ENCODE measurements at regions of chr12 and their contacts with region 1.

Region 1: GRCh38 chr12:113980537-113981337 is 14.6 kb upstream of the RBM19 start:
- DNase-seq: peak; percentile 74
- ATAC-seq: peak; percentile 96
- H3K4me3 ChIP-seq: no peak overlapping the region
- H3K27ac ChIP-seq: no peak overlapping the region
- H3K4me1 ChIP-seq: no peaks in the 10 kb centered on the region
- H3K27me3 ChIP-seq: peaks cover 15% of the 10 kb centered on the region
- CTCF ChIP-seq: peak; percentile 99
- POLR2A ChIP-seq: peak; percentile 55; the same call in 1 of the 2 replicates
- RAD21 ChIP-seq: peak; percentile 99

Region 2: DNA sequence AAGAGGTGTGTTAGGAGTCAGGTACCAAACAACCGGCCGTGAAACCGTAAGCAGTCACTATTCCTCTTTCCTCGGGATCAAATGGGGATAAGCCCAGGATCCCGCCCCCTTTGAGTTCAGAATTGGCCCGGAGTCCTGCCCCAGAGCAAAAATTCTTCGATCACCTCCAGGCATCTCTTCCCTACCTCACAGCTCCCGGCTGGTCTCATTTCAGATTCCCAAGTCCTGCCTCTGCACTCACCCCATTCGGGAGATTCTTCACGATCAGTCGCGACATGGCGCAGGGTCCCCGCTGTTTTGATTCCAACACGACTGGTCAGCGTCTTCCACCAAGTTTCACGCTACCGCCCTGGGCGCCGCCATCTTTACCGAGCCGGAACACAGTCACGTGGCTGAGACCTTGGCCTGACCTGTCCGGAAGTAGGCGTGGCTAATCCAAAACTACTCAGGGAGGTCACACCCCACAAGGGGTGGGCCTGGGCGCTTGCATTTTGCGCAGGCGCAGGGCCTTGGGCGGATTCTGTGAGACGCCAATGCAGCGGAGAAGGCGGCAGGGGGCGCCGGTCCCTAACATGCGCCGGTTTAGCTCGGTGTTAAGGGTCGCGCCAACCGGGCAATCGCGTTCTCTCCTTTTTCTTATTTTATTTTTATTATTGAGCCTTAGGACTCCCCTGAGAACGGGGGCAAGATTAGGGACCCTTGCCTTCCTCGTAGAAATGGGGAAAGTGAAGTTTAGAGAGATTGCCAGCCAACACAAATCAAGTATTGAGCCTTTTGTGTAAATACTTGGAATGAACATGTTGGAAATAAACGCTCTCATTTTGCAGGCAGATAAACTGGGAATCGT is 14.6 kb before region 1 on chr12 and contains the start of gene RBM19:
- CTCF ChIA-PET with region 1: interaction called, 18 read pairs
- POLR2A ChIA-PET with region 1: no interaction called
- dilution Hi-C with region 1: no loop called
- in situ Hi-C with region 1: no loop called
- intact Hi-C with region 1: no loop called
- DNase-seq: peak; percentile 97
- ATAC-seq: peak; percentile 100
- H3K4me3 ChIP-seq: peak within 1 kb of the TSS; percentile 60
- H3K27ac ChIP-seq: peak within 1 kb of the TSS; percentile 63
- H3K4me1 ChIP-seq: no peaks in the 10 kb centered on the region
- H3K27me3 ChIP-seq: peaks cover 5% of the 10 kb centered on the region; the same call in 1 of the 2 replicates
- CTCF ChIP-seq: peak; percentile 95
- POLR2A ChIP-seq: peak; percentile 80; the same call in 1 of the 2 replicates
- RAD21 ChIP-seq: peak; percentile 62
- total RNA-seq, gene RBM19: 18.3 and 19.2 TPM in 2 replicates

Region 3: DNA sequence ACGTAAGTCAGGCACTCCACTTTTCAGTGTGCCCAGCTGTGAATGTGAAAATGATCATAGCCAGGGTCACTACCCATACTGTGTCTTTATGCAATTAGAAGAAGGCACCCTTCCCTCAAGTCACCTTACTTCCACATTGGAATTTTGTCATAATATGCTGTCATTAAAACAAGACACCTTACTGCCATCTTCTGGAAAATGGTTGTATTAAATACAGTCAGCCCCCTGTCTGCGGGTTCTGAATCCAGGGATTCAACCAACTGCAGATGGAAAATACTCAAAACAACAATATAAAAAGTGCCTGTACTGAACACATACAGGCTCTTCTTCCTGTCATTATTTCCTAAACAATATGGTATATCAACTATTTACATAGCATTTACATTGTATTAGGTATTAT is 495.4 kb after region 1 on chr12:
- CTCF ChIA-PET with region 1: interaction called, 6 read pairs
- POLR2A ChIA-PET with region 1: no interaction called
- dilution Hi-C with region 1: no loop called
- in situ Hi-C with region 1: no loop called
- intact Hi-C with region 1: loop called (anchors 1 kb)
- DNase-seq: peak; percentile 66
- ATAC-seq: peak; percentile 64
- H3K4me3 ChIP-seq: no peak overlapping the region
- H3K27ac ChIP-seq: no peak overlapping the region
- H3K4me1 ChIP-seq: no peaks in the 10 kb centered on the region; the same call in 1 of the 2 replicates
- H3K27me3 ChIP-seq: peaks cover 19% of the 10 kb centered on the region
- CTCF ChIP-seq: peak; percentile 71
- POLR2A ChIP-seq: no peak
- RAD21 ChIP-seq: peak; percentile 68

Region 4: DNA sequence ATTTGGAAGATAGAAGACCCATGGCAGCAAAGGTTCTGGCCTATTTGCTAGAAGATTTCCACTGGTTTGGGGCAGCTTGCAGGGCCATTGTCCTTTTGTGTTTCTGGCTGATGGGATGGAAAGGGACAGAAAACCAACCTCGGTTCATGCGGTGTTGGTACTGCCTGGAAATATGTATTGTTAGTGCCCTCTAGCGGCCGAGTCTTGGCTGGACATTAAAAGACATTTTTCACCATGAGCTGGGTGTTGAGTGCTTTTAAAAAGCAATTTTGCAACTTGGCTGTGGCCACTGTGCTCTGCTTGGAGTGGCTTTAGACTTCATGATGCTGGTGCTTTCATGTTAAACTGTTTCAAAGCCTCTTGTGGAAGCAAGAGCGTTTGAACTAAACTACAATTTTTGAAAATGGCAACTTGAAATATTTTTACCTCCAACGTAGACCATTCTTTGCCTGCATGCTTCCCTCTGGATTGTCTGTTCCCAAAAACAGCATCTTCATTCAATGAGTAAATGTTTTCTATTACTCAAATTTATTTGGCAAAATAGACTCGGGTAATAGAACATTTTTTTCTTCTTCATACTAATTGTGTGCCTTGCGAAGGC is 527.9 kb after region 1 on chr12:
- CTCF ChIA-PET with region 1: interaction called, 11 read pairs
- POLR2A ChIA-PET with region 1: no interaction called
- dilution Hi-C with region 1: no loop called
- in situ Hi-C with region 1: loop called (anchors 5 kb)
- intact Hi-C with region 1: loop called (anchors 1 kb)
- DNase-seq: peak; percentile 79
- ATAC-seq: peak; percentile 80
- H3K4me3 ChIP-seq: no peak overlapping the region
- H3K27ac ChIP-seq: no peak overlapping the region
- H3K4me1 ChIP-seq: peaks cover 5% of the 10 kb centered on the region
- H3K27me3 ChIP-seq: no peaks in the 10 kb centered on the region; the same call in 1 of the 2 replicates
- CTCF ChIP-seq: peak; percentile 87
- POLR2A ChIP-seq: no peak
- RAD21 ChIP-seq: peak; percentile 89

Region 5: DNA sequence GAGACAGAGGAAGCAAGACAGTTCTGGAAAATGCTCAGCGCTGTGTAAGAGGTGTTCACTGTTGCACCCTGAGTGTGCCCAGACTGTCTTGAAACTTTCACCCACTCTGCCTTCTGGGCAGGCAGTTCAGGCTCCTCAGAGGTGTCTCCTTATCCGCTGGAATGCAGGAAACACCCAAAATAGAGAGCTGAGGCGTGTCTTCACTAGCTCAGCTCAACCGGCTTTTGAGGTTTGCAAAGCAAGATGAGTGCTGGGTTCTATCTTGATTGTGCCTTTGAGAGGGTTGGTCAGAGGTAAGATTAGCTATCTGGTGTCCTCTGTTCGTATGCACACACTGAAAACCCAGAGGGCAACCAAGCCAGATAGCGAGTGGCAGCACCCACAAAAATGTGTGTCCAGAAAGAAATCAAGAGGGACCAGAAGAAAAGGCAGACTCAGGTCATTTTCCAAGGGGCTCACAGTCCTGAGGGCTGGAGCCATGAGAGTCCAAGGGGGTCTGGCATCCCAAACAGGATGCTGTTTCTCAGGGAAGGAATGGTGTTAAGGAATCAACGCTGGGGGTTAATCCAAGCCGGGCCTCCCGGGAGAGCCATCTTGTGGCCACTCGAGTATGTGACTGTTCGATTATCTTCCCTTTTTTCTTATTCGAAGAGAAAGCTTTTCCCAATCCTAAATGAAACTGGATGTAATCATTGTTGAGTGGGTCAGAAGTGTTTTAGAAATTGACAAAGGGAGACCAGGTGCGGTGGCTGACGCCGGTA is 656.2 kb after region 1 on chr12:
- CTCF ChIA-PET with region 1: interaction called, 12 read pairs
- POLR2A ChIA-PET with region 1: no interaction called
- dilution Hi-C with region 1: no loop called
- in situ Hi-C with region 1: no loop called
- intact Hi-C with region 1: loop called (anchors 1 kb)
- DNase-seq: peak; percentile 19
- ATAC-seq: peak; percentile 84
- H3K4me3 ChIP-seq: no peak overlapping the region
- H3K27ac ChIP-seq: no peak overlapping the region
- H3K4me1 ChIP-seq: no peaks in the 10 kb centered on the region
- H3K27me3 ChIP-seq: peaks cover 1% of the 10 kb centered on the region; the same call in 1 of the 2 replicates
- CTCF ChIP-seq: peak; percentile 58
- POLR2A ChIP-seq: no peak
- RAD21 ChIP-seq: peak; percentile 41; the same call in 1 of the 2 replicates

Region 6: GRCh38 chr12:115916910-115917668 is 1936.4 kb after region 1 on chr12:
- CTCF ChIA-PET with region 1: no interaction called
- POLR2A ChIA-PET with region 1: no interaction called
- dilution Hi-C with region 1: no loop called
- in situ Hi-C with region 1: loop called (anchors 10 kb)
- intact Hi-C with region 1: loop called (anchors 2 kb)
- DNase-seq: no peak
- ATAC-seq: peak; percentile 78
- H3K4me3 ChIP-seq: no peak overlapping the region
- H3K27ac ChIP-seq: no peak overlapping the region
- H3K4me1 ChIP-seq: peaks cover 3% of the 10 kb centered on the region
- H3K27me3 ChIP-seq: peaks cover 28% of the 10 kb centered on the region
- CTCF ChIP-seq: peak; percentile 83
- POLR2A ChIP-seq: no peak
- RAD21 ChIP-seq: peak; percentile 88

Measured in IMR-90 (cell line).